ENCODE measurements at regions of chr20 and their contacts with region 1.

Region 1: DNA sequence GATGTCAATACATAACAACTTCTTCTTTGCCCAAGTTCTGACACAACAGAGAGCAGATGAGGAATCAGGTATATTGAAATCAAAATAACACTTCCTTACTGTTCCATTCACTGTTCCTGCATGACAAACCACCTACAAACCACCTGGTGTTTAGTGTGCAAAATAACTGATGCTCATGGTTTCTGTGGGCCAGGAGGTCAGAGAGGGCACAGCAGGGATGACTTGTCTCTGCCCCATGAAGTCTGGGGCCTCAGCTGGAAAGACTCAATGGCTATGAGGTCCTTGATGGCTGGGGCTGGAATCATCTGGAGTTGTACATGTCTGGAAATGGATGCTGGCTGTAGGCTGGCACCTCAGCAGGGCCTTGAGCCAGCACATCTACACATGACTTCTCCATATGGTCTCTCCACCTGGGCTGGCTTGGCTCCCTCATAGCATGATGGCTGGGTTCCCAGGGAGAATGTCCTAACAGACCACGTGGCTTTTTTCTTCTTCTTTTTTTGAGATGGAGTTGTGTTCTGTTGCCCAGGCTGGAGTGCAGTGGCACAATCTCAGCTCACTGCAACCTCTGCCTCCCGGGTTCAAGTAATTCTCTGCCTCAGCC is 7.4 kb upstream of the COX4I2 start:
- DNase-seq: peak; percentile 48
- H3K4me3 ChIP-seq: no peak overlapping the region
- H3K27ac ChIP-seq: no peak overlapping the region
- H3K4me1 ChIP-seq: no peaks in the 10 kb centered on the region
- H3K27me3 ChIP-seq: no peaks in the 10 kb centered on the region
- CTCF ChIP-seq: no peak

Region 2: DNA sequence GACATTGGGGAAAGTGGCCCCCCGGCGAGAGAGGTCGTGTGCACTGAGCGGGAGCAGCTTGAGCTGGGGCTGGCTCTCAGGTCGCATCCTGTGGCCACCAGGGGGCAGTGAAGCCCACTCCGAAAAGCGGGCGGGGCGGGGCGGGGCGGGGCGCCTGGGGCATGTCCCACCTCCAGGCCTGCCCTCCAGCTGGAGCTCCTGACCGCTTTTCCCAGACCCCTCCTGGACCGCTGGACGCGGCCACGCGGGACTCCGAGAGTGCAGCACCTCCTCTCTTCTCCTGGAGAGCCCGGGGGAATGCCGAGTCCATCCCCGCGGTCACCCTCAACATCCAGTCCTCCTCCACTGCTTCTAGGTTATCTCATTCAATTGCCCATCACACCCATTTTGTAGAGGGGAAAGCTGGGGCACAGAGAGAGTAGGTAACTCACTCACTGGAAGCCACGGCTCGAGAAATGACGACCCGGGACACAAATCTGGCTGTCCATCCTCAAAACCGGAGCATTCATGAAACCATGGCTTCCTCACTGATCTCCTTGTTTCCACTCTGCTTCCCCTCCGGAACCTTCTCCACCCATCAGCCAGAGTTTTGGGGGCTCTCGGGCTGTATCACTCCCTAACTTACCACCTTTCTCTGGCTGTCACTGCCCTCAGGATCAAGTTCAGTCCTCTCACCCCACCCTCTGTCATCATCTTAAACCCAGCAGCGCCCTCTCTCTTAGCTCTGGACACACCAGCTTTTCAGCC is 31.5 kb after region 1 on chr20:
- CTCF ChIA-PET with region 1: interaction called, 15 read pairs
- dilution Hi-C with region 1: no loop called
- in situ Hi-C with region 1: no loop called
- intact Hi-C with region 1: no loop called
- DNase-seq: peak; percentile 62
- H3K4me3 ChIP-seq: peak overlapping the region in 1 of 3 experiments; percentile 38
- H3K27ac ChIP-seq: peak overlapping the region; percentile 24
- H3K4me1 ChIP-seq: peaks cover 9% of the 10 kb centered on the region
- H3K27me3 ChIP-seq: no peaks in the 10 kb centered on the region
- CTCF ChIP-seq: peak; percentile 44 to 74

Region 3: DNA sequence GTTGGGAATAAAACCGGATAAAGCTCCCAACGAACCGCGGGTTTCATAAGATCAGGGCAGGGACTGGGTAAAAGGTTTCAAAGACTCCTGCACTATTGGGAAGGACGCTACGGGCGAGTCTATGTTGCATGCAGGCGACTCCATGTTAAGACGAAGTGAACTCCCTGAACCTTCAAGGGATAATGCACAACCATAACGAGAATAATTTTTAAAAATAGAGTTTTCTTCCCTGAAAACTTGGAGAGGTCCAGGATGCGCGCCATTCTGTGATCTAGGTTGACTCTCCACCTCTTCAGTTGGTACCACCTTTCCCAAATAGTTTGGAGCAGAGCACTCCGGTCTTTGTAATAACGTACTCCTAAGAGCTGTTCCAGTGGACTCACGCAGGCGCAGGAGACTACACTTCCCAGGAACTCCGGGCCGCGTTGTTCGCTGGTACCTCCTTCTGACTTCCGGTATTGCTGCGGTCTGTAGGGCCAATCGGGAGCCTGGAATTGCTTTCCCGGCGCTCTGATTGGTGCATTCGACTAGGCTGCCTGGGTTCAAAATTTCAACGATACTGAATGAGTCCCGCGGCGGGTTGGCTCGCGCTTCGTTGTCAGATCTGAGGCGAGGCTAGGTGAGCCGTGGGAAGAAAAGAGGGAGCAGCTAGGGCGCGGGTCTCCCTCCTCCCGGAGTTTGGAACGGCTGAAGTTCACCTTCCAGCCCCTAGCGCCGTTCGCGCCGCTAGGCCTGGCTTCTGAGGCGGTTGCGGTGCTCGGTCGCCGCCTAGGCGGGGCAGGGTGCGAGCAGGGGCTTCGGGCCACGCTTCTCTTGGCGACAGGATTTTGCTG is 108.7 kb after region 1 on chr20 and contains the start of gene TPX2:
- CTCF ChIA-PET with region 1: no interaction called
- dilution Hi-C with region 1: no loop called
- in situ Hi-C with region 1: loop called in 1 of 2 experiments (anchors 10 kb)
- intact Hi-C with region 1: no loop called
- DNase-seq: peak; percentile 96
- H3K4me3 ChIP-seq: peak within 1 kb of the TSS; percentile 77 to 96 (median 85)
- H3K27ac ChIP-seq: peak within 1 kb of the TSS; percentile 92
- H3K4me1 ChIP-seq: peaks cover 4% of the 10 kb centered on the region
- H3K27me3 ChIP-seq: no peaks in the 10 kb centered on the region
- CTCF ChIP-seq: peak in 1 of 2 donors; percentile 33
- total RNA-seq, gene TPX2: 9.5 to 74.3 TPM